Naive thymus-derived CD4-positive, alpha-beta T cell (primary cell): ENCODE measurements at regions of chr18 and their contacts with region 1.

Region 1: DNA sequence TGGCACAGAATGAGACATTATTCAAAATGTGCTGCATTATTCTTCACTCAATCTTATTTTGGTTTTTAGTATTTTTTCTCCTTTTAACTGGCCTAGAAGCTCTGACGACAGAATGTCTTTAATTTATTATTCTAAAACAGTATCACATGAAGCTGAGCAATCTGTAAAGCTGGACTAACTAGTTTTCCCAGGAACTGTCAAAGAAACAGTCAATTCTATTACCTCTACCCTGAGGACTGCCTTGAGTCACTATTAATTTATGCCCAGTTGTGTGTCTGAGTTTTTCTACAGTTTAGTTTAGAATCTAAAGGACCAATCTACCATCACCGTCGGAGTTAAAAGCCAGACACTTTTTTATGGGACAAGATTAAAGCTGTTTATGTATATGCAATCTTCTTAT is 31.6 kb downstream of the MBD2 start:
- DNase-seq: no peak
- ATAC-seq: no peak
- H3K4me3 ChIP-seq: no peak overlapping the region
- H3K4me3 Mint-ChIP-seq: no peak overlapping the region
- H3K27ac ChIP-seq: no peak overlapping the region
- H3K27ac Mint-ChIP-seq: peak overlapping the region in 1 of 9 donors; percentile 30
- H3K4me1 ChIP-seq: no peaks in the 10 kb centered on the region
- H3K4me1 Mint-ChIP-seq: peaks cover 0 to 15% (median 8%) of the 10 kb centered on the region in 7 donors
- H3K27me3 ChIP-seq: no peaks in the 10 kb centered on the region
- H3K27me3 Mint-ChIP-seq: no peaks in the 10 kb centered on the region

Region 2: GRCh38 chr18:54181856-54182602 is 10.9 kb before region 1 on chr18:
- CTCF ChIA-PET with region 1: no interaction called
- POLR2A ChIA-PET with region 1: no interaction called
- intact Hi-C with region 1: loop called in 1 of 2 experiments (anchors 1 kb)
- DNase-seq: no peak
- ATAC-seq: no peak
- H3K4me3 ChIP-seq: no peak overlapping the region
- H3K4me3 Mint-ChIP-seq: no peak overlapping the region
- H3K27ac ChIP-seq: no peak overlapping the region
- H3K27ac Mint-ChIP-seq: no peak overlapping the region
- H3K4me1 ChIP-seq: no peaks in the 10 kb centered on the region
- H3K4me1 Mint-ChIP-seq: peaks cover under 1 to 9% (median 4%) of the 10 kb centered on the region in 7 donors
- H3K27me3 ChIP-seq: no peaks in the 10 kb centered on the region
- H3K27me3 Mint-ChIP-seq: no peaks in the 10 kb centered on the region